Dendritic cell treated with granulocyte-macrophage colony-stimulating factor and Interleukin-4, amounts not matched to agents 40 ng/mL and 50 ng/mL, for 4 days (primary cell): ENCODE measurements at regions of chr7 and their contacts with region 1.

Region 1: GRCh38 chr7:71733107-71733870 is 601.3 kb downstream of the GALNT17 start:
- H3K4me3 Mint-ChIP-seq: no peak overlapping the region
- H3K27ac Mint-ChIP-seq: no peak overlapping the region
- H3K4me1 Mint-ChIP-seq: no peaks in the 10 kb centered on the region
- H3K27me3 Mint-ChIP-seq: peaks cover 5% of the 10 kb centered on the region

Region 2: DNA sequence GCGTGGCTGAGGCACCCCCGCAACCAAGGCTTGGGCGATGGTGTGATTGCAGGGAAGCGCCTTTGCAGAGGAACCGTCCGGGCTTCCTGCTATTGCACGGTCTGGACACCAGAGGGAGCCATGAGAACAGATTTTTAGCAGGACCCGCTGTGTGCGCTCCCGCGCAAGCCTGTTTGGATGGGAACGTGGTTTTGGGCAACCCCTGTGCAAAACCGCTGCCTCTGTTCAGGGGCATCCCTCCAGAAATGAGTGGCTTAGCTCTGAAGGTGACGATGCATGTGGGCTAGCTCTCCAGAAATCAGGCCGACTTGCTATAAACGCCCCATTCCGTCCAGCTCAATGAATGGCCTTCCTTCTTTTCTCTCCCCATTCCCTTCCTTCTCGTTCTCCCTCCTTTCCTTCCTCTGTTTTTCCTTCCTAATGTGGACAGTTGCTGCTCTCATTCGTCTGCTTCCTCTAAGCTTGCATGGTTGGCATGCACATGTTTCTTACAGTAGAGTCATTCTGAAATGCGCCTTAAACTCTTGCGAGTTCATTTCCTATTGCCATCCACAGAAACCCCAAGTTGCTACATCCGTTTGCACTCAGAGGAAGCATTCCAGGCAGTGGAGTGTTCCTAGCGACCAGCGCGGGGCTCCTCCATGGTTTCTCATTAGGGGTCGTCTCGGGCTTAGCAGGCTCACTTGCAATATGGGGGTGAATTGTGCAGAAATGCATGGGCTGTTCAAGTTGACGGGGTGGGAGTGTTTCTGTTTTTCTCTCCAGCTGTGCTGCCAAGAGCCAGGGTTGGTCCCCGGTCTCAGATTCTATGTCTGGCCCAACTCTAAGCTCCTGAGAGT is 903.8 kb before region 1 on chr7:
- intact Hi-C with region 1: loop called (anchors 10 kb)
- H3K4me3 Mint-ChIP-seq: peak overlapping the region; percentile 6
- H3K27ac Mint-ChIP-seq: no peak overlapping the region
- H3K4me1 Mint-ChIP-seq: peaks cover 10% of the 10 kb centered on the region
- H3K27me3 Mint-ChIP-seq: peaks cover 12% of the 10 kb centered on the region

Region 3: GRCh38 chr7:70856866-70857630 is 876.2 kb before region 1 on chr7:
- intact Hi-C with region 1: loop called (anchors 1 kb)
- H3K4me3 Mint-ChIP-seq: no peak overlapping the region
- H3K27ac Mint-ChIP-seq: no peak overlapping the region
- H3K4me1 Mint-ChIP-seq: no peaks in the 10 kb centered on the region
- H3K27me3 Mint-ChIP-seq: no peaks in the 10 kb centered on the region

Region 4: DNA sequence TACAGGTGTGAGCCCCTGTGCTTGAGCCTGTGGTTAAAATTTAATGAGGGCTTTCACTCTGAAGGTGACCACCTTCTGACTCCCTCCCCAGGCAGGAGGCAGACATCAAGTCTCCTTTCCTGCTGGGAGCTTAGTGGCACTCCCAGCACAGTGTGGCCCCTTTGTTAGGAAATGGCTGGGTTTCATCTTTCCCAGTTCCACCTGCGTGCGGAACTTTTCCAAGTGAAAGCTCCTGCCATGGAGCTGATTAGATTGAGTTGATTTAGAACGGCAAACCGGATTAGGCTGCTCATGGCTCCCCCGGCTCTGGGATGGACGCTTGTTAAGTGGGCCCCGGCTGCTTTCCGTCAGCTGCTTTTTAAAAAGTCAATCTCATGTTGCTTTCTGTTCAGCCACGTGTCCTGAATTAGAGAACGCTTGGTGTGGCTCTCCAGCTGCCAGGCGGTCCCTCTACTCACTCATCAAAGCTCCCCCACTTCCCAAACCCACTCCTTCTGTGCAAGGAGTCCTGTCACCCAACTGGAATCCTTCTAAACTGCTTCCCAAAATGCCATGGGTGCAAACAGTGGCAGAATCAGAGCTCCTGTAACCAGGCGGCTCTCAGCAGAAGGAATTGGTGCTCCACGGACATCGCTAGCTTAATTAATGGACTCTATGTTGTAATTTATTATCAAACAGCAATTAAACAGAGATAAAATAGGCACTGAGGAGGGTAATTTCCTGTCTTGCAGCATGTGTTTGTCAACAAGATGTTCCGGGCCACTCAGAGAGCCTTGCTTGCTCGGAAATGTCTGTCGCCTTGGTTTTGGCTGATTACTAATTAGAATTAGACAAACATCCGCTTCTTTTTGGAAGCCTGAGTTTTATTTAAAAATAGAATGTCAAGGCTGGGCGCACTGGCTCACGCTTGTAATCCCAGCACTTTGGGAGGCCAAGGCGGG is 50.2 kb before region 1 on chr7:
- intact Hi-C with region 1: no loop called
- H3K4me3 Mint-ChIP-seq: no peak overlapping the region
- H3K27ac Mint-ChIP-seq: no peak overlapping the region
- H3K4me1 Mint-ChIP-seq: no peaks in the 10 kb centered on the region
- H3K27me3 Mint-ChIP-seq: no peaks in the 10 kb centered on the region